Activated T-helper 2 cell treated with anti-CD3 and anti-CD28 coated beads, Interferon-gamma antibody, Interleukin-2, Interleukin-4, amounts not matched to agents 10 μg/mL and 5 μg/mL and 100 μg/mL, durations not matched to agents 14 hours and 24 hours and 36 hours (primary cell): ENCODE measurements at regions of chr3 and their contacts with region 1.

Region 1: GRCh38 chr3:46297658-46298463 is 55.6 kb downstream of the CCR3 start:
- DNase-seq: no peak
- H3K4me3 Mint-ChIP-seq: no peak overlapping the region
- H3K27ac Mint-ChIP-seq: peak overlapping the region; percentile 15
- H3K4me1 Mint-ChIP-seq: peaks cover 79% of the 10 kb centered on the region
- H3K27me3 Mint-ChIP-seq: peaks cover 15% of the 10 kb centered on the region

Region 2: DNA sequence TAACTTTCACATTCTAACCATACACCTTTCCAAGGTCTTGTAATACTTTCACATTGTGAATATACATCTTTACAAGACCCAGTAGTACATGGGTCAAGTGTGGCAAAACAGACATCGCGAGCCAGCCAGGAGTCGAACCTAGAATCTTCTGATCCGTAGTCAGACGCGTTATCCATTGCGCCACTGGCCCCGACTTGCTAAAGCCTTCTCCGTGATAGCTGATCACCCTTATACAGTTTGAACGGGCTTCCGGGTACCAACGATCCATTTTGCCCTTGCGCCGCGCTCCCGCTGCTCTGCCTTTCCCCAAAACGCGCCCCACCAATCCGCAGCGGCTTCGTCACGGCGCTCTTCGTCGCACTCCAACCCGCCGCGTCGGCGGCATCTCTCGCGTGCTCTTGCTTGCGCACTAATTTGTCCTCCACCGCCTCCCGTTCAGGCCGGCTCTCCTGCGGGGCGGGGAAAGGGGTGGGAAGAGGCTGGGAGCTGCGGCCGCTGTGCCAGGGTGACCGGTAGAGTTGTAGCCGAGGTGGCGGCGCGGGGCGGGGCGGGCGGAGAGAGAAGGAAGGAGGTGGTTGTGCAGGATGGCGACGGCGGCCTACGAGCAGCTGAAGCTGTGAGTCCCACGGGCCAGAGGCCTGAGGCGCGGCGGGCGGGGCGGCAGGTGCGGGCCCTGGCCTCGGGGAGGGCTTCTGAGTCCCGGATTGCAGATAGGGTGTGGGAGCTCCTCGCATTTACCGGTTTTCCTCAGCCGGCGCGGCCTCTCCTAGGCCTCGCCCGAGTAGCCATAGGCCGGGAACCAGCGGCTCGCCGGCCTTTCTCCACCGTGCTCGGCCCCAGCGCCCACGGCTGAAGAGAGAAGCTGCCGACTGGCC is 608.7 kb before region 1 on chr3 and contains the start of gene SACM1L:
- intact Hi-C with region 1: loop called (anchors 10 kb)
- DNase-seq: peak; percentile 97
- H3K4me3 Mint-ChIP-seq: peak within 1 kb of the TSS; percentile 93
- H3K27ac Mint-ChIP-seq: peak within 1 kb of the TSS; percentile 93
- H3K4me1 Mint-ChIP-seq: peaks cover 40% of the 10 kb centered on the region
- H3K27me3 Mint-ChIP-seq: peaks cover 2% of the 10 kb centered on the region
- total RNA-seq, gene SACM1L: 105 and 107 TPM in 2 replicates

Region 3: DNA sequence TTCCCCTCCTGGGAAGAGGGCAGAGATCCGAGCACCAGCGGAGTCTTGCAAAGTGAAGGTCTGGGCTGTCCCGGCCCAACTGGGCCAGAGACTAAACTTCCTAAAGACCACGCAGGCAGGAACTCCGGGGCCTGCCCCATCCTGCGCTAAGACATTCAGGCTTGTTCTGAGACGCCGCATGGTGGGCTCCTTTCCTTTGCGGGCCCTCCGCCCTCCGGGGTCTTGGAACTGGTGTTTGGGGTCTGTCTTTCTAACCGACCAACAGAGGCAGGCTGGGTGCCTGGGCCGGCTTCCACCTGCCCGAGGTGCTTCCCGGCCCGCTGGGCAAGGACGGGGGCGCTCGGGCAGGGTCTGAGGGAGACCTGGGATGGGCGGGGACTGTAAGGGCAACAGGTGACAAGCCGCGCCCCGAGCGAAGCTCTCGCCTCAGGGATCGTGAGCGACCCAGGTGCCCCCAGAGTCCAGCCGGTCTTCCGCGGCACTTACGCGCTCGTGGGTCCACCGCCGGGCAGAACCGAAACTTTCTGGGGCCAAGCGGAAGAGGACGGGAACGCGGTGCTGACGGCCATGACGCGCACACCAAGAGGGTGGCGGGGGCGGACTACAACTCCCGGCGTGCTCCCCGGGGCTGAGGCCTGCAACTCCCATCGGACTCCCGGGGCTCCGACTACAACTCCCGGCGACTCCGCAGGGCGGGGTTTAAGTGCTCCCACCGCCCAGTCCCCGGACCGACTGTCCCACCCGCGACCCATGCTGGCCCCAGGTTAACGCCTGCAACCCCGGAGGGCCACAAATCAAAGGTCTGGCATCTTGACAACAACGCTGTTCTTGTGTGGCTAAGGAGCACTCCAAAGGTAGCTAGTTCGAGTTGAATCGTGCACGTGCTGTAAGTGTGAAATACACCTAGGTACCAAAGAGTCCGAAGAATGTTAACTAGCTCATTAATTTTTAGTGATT is 302.3 kb before region 1 on chr3 and contains the start of gene FYCO1:
- intact Hi-C with region 1: loop called (anchors 10 kb)
- DNase-seq: peak; percentile 80
- H3K4me3 Mint-ChIP-seq: peak within 1 kb of the TSS; percentile 85
- H3K27ac Mint-ChIP-seq: peak within 1 kb of the TSS; percentile 95
- H3K4me1 Mint-ChIP-seq: peaks cover 44% of the 10 kb centered on the region
- H3K27me3 Mint-ChIP-seq: peaks cover 13% of the 10 kb centered on the region
- total RNA-seq, gene FYCO1: 19.6 and 20.2 TPM in 2 replicates

Region 4: GRCh38 chr3:46186471-46187340 is 111.2 kb before region 1 on chr3:
- intact Hi-C with region 1: no loop called
- DNase-seq: no peak
- H3K4me3 Mint-ChIP-seq: no peak overlapping the region
- H3K27ac Mint-ChIP-seq: no peak overlapping the region
- H3K4me1 Mint-ChIP-seq: peaks cover 14% of the 10 kb centered on the region
- H3K27me3 Mint-ChIP-seq: peaks cover 32% of the 10 kb centered on the region

Region 5: DNA sequence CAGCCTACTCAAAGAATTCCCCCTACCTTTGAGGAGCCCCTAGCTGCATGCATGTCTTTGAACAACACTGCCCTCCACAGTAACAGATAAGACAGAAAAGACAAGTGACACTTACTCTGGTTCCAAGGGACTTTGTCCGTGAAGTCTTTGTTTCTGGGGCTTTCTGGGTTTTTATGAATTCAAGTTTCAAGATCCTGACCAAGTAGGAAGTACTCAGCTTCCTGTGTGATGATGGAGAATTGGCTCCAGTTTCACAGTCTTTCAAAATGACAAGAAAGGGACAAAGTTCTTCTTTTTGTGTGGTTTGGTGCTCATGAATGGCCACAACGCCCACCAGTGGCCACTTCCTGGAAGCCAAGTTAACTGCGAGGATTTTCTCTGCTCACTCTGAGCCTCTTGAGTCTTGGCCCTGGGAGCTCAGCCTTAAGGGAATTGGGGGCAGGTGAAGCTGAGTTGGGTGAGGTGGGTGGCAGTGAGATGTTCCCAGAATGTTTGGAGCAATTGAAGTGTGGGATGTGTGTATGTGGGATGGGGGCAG is 89.6 kb before region 1 on chr3 and contains the start of gene CCR1:
- intact Hi-C with region 1: loop called (anchors 1 kb)
- DNase-seq: peak; percentile 44
- H3K4me3 Mint-ChIP-seq: no peak within 1 kb of the TSS
- H3K27ac Mint-ChIP-seq: peak within 1 kb of the TSS; percentile 18
- H3K4me1 Mint-ChIP-seq: peaks cover 25% of the 10 kb centered on the region
- H3K27me3 Mint-ChIP-seq: peaks cover 31% of the 10 kb centered on the region
- total RNA-seq, gene CCR1: 0.41 and 0.51 TPM in 2 replicates

Region 6: DNA sequence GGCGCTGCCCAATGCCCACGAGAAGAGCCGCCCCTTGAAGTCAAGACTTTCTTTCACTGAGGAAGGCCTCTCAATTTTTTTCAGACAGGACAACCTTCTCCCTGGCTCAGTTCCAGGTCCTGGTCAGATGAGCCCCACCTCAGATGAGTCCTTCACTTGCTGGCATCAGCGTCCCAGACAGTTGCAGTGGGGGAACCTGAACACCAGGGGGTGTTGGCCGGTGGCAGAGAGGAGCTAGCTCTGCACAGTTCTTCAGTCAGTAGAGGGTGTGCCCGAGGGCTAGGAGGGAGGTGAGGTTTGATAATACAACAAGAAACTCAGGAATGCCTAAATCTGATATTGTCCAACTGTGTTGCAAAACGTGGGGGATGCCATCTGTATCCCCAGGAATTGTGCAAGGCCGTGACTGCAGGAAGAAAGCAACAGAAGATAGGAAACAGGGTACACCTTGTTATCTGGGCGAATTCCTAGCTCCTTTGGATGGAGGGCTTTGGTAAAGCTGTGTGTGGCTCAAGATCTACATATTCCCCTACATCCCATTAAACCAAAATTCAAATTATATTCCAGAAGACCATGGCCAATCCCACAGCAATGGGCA is 21.3 kb before region 1 on chr3:
- intact Hi-C with region 1: loop called (anchors 1 kb)
- DNase-seq: peak; percentile 65
- H3K4me3 Mint-ChIP-seq: no peak overlapping the region
- H3K27ac Mint-ChIP-seq: no peak overlapping the region
- H3K4me1 Mint-ChIP-seq: peaks cover 38% of the 10 kb centered on the region
- H3K27me3 Mint-ChIP-seq: peaks cover 49% of the 10 kb centered on the region

Region 7: DNA sequence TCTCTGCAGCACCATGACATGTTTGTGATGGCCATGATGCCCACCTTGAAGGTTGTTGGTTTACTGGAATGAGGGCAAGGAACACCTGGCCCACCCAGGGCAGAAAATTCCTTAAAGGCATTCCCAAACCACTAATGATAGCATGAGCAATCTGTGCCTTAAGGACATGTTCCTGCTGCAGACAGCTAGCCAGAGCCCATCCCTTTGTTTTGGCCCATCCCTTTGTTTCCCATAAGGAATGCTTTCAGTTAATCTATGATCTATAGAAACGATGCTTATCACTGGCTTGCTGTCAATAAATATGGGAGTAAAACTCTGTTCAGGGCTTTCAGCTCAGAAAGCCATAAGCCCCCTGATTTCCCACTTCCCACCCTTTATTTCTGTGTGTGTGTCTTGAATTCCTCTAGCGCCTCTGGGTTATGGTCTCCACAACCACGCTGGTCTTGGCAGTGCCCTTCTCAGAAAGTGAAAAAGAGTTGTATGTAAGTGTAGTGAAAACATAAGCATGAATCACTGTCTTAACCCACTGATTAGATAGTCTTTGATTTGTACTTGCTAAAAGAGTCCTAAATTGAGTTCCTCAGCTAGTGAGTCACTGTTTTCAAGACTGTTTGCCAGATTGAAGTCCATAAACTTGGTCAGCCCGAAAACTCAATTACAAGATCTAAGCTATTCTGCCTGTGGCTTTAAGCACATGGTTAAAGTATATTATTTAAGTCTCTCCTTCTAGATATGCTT is 37.0 kb after region 1 on chr3:
- intact Hi-C with region 1: loop called (anchors 2 kb)
- DNase-seq: no peak
- H3K4me3 Mint-ChIP-seq: no peak overlapping the region
- H3K27ac Mint-ChIP-seq: no peak overlapping the region
- H3K4me1 Mint-ChIP-seq: peaks cover 5% of the 10 kb centered on the region
- H3K27me3 Mint-ChIP-seq: peaks cover 44% of the 10 kb centered on the region

Region 8: DNA sequence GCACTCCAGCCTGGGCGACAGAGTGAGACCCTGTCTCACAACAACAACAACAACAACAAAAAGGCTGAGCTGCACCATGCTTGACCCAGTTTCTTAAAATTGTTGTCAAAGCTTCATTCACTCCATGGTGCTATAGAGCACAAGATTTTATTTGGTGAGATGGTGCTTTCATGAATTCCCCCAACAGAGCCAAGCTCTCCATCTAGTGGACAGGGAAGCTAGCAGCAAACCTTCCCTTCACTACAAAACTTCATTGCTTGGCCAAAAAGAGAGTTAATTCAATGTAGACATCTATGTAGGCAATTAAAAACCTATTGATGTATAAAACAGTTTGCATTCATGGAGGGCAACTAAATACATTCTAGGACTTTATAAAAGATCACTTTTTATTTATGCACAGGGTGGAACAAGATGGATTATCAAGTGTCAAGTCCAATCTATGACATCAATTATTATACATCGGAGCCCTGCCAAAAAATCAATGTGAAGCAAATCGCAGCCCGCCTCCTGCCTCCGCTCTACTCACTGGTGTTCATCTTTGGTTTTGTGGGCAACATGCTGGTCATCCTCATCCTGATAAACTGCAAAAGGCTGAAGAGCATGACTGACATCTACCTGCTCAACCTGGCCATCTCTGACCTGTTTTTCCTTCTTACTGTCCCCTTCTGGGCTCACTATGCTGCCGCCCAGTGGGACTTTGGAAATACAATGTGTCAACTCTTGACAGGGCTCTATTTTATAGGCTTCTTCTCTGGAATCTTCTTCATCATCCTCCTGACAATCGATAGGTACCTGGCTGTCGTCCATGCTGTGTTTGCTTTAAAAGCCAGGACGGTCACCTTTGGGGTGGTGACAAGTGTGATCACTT is 74.9 kb after region 1 on chr3:
- intact Hi-C with region 1: loop called (anchors 1 kb)
- DNase-seq: peak; percentile 24
- H3K4me3 Mint-ChIP-seq: no peak overlapping the region
- H3K27ac Mint-ChIP-seq: no peak overlapping the region
- H3K4me1 Mint-ChIP-seq: peaks cover 55% of the 10 kb centered on the region
- H3K27me3 Mint-ChIP-seq: peaks cover 51% of the 10 kb centered on the region